CD8-positive, alpha-beta T cell (primary cell): ENCODE measurements at regions of chr22 and their contacts with region 1.

Region 1: DNA sequence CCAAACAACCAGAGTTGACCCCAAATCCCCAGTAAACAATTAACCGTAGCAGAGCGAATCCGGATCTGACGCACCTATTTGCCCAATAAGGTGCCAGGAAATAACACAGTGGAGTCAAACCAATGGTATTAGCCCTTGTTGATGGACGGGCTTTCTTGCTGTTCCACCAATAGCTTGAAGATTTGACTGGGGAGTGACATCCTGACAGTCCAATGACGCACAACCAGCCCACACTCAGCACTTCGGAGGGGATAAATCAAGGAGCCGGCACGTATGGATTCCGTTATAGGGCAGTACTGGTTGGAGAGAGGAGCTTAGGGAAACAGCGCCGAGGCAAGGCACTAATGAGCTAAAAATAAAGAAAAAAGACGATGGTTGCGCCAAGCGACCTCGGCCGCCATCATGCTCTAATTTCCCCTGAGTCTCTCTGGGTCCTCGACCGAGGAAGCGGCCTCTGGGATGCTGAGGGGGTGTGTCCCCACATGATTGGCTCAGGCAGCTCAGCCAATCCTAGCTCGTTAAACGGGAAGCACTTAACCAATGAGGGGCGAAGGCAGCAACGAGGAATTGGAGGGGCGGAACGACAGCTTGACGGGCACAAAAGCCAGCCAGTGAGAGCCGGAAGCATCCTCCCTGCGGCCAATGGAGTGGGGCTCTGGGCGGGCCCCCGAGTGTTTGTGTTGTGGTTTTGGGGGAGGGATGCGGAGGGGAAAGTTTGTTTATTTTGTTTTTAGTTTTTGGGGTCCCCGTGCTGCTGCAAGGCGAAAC is 49.5 kb downstream of the FAM83F start:
- DNase-seq: peak; percentile 95 to 100 (median 99)
- ATAC-seq: peak; percentile 86
- H3K4me3 ChIP-seq: peak overlapping the region; percentile 80 to 84
- H3K4me3 Mint-ChIP-seq: peak overlapping the region; percentile 94
- H3K27ac ChIP-seq: peak overlapping the region; percentile 97 to 98
- H3K27ac Mint-ChIP-seq: peak overlapping the region; percentile 100
- H3K4me1 ChIP-seq: peaks cover 28% of the 10 kb centered on the region
- H3K4me1 Mint-ChIP-seq: peaks cover 39% of the 10 kb centered on the region
- H3K27me3 ChIP-seq: no peaks in the 10 kb centered on the region
- H3K27me3 Mint-ChIP-seq: peaks cover 8% of the 10 kb centered on the region
- CTCF ChIP-seq: no peak

Region 2: DNA sequence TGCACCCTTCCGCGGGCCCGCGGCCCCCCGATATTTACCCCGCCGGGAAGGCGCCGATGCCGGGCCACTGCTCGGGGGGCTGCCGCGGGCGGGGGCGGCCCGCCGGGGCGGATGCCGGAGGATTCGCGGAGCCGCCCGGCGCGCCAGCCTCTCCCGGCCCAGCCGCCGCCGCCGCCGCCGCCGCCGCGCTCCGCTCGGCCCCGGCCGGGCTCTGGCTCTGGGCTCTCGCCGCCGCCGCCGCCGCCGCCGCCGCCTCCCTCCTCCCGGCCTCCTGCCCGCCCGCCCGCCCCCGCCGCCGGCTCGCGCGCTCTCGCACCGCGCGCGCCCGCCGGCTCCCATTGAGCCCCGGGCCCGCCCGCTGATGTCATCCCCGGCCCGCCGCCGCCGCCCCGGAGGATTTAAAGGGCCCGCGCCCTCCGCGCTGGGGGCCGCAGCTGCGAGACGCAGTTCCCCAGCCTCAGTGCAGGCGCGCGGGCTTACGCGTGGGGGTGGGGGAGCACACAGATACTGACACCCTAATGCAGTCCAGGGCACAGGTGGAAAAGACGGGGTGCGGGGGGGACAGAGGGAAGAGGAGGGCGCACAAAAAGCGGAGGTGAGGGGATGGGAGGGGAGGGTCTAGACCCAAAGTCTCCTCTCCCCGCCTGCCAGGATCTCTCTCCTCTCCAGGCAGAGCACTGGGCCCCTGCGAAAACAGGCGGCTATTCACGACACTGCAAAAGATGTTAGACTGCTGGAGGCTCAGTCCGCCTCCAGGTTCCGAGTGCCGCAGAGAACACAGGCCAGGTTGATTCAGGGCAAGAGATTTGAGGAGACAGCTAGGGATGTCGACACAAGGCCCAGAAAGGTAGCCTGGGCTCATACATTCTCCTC is 1726.9 kb before region 1 on chr22 and contains the start of gene CSNK1E:
- CTCF ChIA-PET with region 1: no interaction called
- POLR2A ChIA-PET with region 1: no interaction called
- intact Hi-C with region 1: loop called in 1 of 2 experiments (anchors 5 kb)
- DNase-seq: peak; percentile 39 to 85 (median 73)
- ATAC-seq: peak; percentile 61
- H3K4me3 ChIP-seq: peak within 1 kb of the TSS; percentile 59 to 60
- H3K4me3 Mint-ChIP-seq: peak within 1 kb of the TSS; percentile 88
- H3K27ac ChIP-seq: peak within 1 kb of the TSS; percentile 80 to 89
- H3K27ac Mint-ChIP-seq: peak within 1 kb of the TSS; percentile 96
- H3K4me1 ChIP-seq: peaks cover 43% of the 10 kb centered on the region
- H3K4me1 Mint-ChIP-seq: peaks cover 45% of the 10 kb centered on the region
- H3K27me3 ChIP-seq: no peaks in the 10 kb centered on the region
- H3K27me3 Mint-ChIP-seq: no peaks in the 10 kb centered on the region
- CTCF ChIP-seq: no peak
- total RNA-seq, gene CSNK1E: 172 to 178 TPM

Region 3: DNA sequence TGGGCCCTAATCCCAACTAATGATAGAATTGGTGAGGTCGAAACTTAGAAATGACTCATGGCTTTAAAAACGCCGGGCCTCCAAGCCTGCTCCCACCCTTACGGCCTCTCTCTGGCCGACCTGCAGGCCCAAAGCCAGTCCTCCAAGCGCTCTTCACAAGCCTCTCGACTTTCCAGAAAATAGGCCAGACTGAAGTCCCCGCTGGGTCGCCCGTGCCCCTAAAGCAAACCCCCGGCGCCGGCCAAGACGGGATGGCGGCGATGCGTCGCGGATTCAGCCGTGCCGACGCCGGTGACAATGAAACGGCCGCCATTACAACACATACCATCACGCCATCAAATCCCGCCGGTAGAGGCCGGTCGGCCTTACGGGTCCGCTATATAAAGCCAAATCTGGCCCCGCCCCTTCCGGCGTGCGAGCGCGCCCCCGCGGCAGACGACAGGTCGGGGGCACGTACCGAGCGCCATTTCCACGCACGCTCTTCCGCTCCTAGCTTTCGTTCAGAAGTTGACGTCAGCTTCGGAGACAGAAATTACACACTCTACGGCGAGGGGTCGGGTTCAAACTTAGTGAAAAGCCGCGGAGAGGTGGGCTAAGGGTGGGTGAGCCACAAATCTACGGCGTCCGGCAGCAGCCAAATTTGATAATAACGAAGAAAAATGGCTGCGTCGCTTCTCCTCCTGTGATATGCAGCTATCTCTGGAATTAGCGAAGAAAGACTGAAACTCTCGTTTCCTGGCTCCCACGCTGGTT is 724.8 kb before region 1 on chr22 and contains the start of gene RPL3:
- CTCF ChIA-PET with region 1: no interaction called
- POLR2A ChIA-PET with region 1: interaction called, 22 read pairs
- intact Hi-C with region 1: no loop called
- DNase-seq: peak; percentile 96 to 100 (median 98)
- ATAC-seq: peak; percentile 85
- H3K4me3 ChIP-seq: peak within 1 kb of the TSS; percentile 91 to 99
- H3K4me3 Mint-ChIP-seq: peak within 1 kb of the TSS; percentile 96
- H3K27ac ChIP-seq: peak within 1 kb of the TSS; percentile 81 to 90
- H3K27ac Mint-ChIP-seq: peak within 1 kb of the TSS; percentile 96
- H3K4me1 ChIP-seq: peaks cover 45% of the 10 kb centered on the region
- H3K4me1 Mint-ChIP-seq: peaks cover 46% of the 10 kb centered on the region
- H3K27me3 ChIP-seq: no peaks in the 10 kb centered on the region
- H3K27me3 Mint-ChIP-seq: no peaks in the 10 kb centered on the region
- CTCF ChIP-seq: no peak
- total RNA-seq, gene RPL3: 3,777 to 3,874 TPM

Region 4: DNA sequence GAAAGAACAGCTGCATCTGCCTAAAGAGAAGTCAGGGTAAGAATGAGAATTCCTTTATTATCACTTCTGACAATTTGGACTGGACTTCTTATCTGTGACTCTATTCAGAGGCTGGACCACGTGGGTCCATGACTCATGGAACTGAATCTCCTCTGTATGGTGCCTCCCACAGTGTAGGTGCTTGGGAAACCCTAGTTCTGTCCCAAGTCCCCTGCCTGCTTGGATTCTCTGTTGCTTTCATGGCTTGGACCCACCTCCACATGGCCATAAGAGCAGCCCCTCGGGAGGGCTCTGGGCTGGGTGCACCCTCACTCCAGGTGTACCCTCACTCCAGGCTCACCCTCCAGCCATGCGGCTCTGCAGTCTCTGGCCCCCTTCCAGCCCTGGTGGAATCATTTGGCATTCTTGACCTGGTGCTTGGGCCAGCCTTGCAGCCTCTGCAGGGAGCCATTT is 320.4 kb before region 1 on chr22:
- CTCF ChIA-PET with region 1: no interaction called
- POLR2A ChIA-PET with region 1: no interaction called
- intact Hi-C with region 1: no loop called
- DNase-seq: no peak
- ATAC-seq: no peak
- H3K4me3 ChIP-seq: no peak overlapping the region
- H3K4me3 Mint-ChIP-seq: no peak overlapping the region
- H3K27ac ChIP-seq: no peak overlapping the region
- H3K27ac Mint-ChIP-seq: no peak overlapping the region
- H3K4me1 ChIP-seq: no peaks in the 10 kb centered on the region
- H3K4me1 Mint-ChIP-seq: no peaks in the 10 kb centered on the region
- H3K27me3 ChIP-seq: no peaks in the 10 kb centered on the region
- H3K27me3 Mint-ChIP-seq: peaks cover 3% of the 10 kb centered on the region
- CTCF ChIP-seq: no peak

Region 5: GRCh38 chr22:40009292-40009769 is 35.0 kb before region 1 on chr22:
- CTCF ChIA-PET with region 1: no interaction called
- POLR2A ChIA-PET with region 1: interaction called, 11 read pairs
- intact Hi-C with region 1: no loop called
- DNase-seq: no peak
- ATAC-seq: no peak
- H3K4me3 ChIP-seq: no peak overlapping the region
- H3K4me3 Mint-ChIP-seq: peak overlapping the region; percentile 81
- H3K27ac ChIP-seq: no peak overlapping the region
- H3K27ac Mint-ChIP-seq: peak overlapping the region; percentile 88
- H3K4me1 ChIP-seq: peaks cover 11% of the 10 kb centered on the region
- H3K4me1 Mint-ChIP-seq: peaks cover 10% of the 10 kb centered on the region
- H3K27me3 ChIP-seq: peaks cover 0 to 4% of the 10 kb centered on the region in 2 experiments
- H3K27me3 Mint-ChIP-seq: peaks cover 11% of the 10 kb centered on the region
- CTCF ChIP-seq: no peak

Region 6: GRCh38 chr22:40116496-40117200 is 72.4 kb after region 1 on chr22:
- CTCF ChIA-PET with region 1: no interaction called
- POLR2A ChIA-PET with region 1: interaction called, 13 read pairs
- intact Hi-C with region 1: loop called (anchors 2 kb)
- DNase-seq: peak; percentile 24 to 89 (median 68)
- ATAC-seq: peak; percentile 89
- H3K4me3 ChIP-seq: peak overlapping the region in 1 of 2 experiments; percentile 30
- H3K4me3 Mint-ChIP-seq: peak overlapping the region; percentile 52
- H3K27ac ChIP-seq: peak overlapping the region; percentile 29 to 51
- H3K27ac Mint-ChIP-seq: peak overlapping the region; percentile 85
- H3K4me1 ChIP-seq: peaks cover 74% of the 10 kb centered on the region
- H3K4me1 Mint-ChIP-seq: peaks cover 87% of the 10 kb centered on the region
- H3K27me3 ChIP-seq: no peaks in the 10 kb centered on the region
- H3K27me3 Mint-ChIP-seq: no peaks in the 10 kb centered on the region
- CTCF ChIP-seq: no peak

Region 7: GRCh38 chr22:40243891-40244290 is 199.6 kb after region 1 on chr22:
- CTCF ChIA-PET with region 1: no interaction called
- POLR2A ChIA-PET with region 1: interaction called, 3 read pairs
- intact Hi-C with region 1: loop called in 1 of 2 experiments (anchors 5 kb)
- DNase-seq: peak in 3 of 9 experiments; percentile 22 to 68 (median 47)
- ATAC-seq: no peak
- H3K4me3 ChIP-seq: no peak overlapping the region
- H3K4me3 Mint-ChIP-seq: peak overlapping the region; percentile 38
- H3K27ac ChIP-seq: peak overlapping the region in 1 of 2 experiments; percentile 11
- H3K27ac Mint-ChIP-seq: peak overlapping the region; percentile 71
- H3K4me1 ChIP-seq: peaks cover 78% of the 10 kb centered on the region
- H3K4me1 Mint-ChIP-seq: peaks cover 80% of the 10 kb centered on the region
- H3K27me3 ChIP-seq: no peaks in the 10 kb centered on the region
- H3K27me3 Mint-ChIP-seq: no peaks in the 10 kb centered on the region
- CTCF ChIP-seq: no peak